Caco-2 (cell line): ENCODE measurements at regions of chr17 and their contacts with region 1.

Region 1: GRCh38 chr17:7716901-7717755 is at the start of gene DNAH2:
- DNase-seq: peak; percentile 84
- H3K4me3 ChIP-seq: peak within 1 kb of the TSS; percentile 55
- H3K4me3 Mint-ChIP-seq: peak within 1 kb of the TSS; percentile 85
- H3K27ac Mint-ChIP-seq: peak within 1 kb of the TSS; percentile 17
- H3K4me1 ChIP-seq: no peaks in the 10 kb centered on the region
- H3K4me1 Mint-ChIP-seq: no peaks in the 10 kb centered on the region
- H3K27me3 ChIP-seq: no peaks in the 10 kb centered on the region
- H3K27me3 Mint-ChIP-seq: peaks cover 11% of the 10 kb centered on the region
- CTCF ChIP-seq: peak in 1 of 2 experiments; percentile 57
- total RNA-seq, gene DNAH2: 1.9 and 2.8 TPM in 2 replicates

Region 2: DNA sequence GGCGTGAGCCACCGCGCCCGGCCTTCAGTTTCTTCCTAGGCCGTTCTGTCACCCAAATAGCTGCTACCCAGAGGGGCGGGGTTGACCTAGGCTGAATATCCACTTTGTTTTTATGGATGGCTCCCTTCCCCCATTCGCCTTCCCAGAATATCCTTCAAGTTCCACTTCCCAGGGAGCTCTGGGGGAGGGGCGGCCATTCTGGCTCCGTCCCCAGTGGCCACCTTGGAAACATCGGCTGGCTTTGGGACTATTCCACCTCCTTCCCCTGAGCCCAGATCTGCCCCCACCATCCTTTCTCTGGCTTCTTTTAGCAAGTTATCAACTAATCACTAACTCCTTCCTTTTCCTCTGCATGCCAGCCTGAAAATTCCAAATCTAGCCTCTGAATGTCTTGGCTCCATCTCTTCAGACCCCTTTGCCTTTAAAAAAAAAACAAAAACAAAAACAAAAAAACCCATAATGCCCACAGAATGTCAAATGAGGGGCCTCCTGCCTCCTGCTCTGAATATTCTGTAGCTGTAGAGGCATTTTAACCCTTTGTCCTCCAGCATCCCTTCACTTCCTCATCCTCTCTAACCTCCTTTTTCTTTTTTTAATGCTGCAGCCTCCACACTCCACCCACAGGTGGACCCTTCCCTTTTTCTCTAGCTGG is 60.0 kb before region 1 on chr17:
- CTCF ChIA-PET with region 1: interaction called, 10 read pairs
- POLR2A ChIA-PET with region 1: no interaction called
- intact Hi-C with region 1: no loop called
- DNase-seq: no peak
- H3K4me3 ChIP-seq: no peak overlapping the region
- H3K4me3 Mint-ChIP-seq: no peak overlapping the region
- H3K27ac Mint-ChIP-seq: no peak overlapping the region
- H3K4me1 ChIP-seq: no peaks in the 10 kb centered on the region
- H3K4me1 Mint-ChIP-seq: no peaks in the 10 kb centered on the region
- H3K27me3 ChIP-seq: no peaks in the 10 kb centered on the region
- H3K27me3 Mint-ChIP-seq: no peaks in the 10 kb centered on the region
- CTCF ChIP-seq: no peak

Region 3: GRCh38 chr17:7703584-7704479 is 13.3 kb before region 1 on chr17:
- CTCF ChIA-PET with region 1: interaction called, 24 read pairs
- POLR2A ChIA-PET with region 1: no interaction called
- intact Hi-C with region 1: no loop called
- DNase-seq: peak; percentile 44 to 59
- H3K4me3 ChIP-seq: no peak overlapping the region
- H3K4me3 Mint-ChIP-seq: peak overlapping the region; percentile 73
- H3K27ac Mint-ChIP-seq: peak overlapping the region; percentile 84
- H3K4me1 ChIP-seq: no peaks in the 10 kb centered on the region
- H3K4me1 Mint-ChIP-seq: no peaks in the 10 kb centered on the region
- H3K27me3 ChIP-seq: no peaks in the 10 kb centered on the region
- H3K27me3 Mint-ChIP-seq: no peaks in the 10 kb centered on the region
- CTCF ChIP-seq: no peak

Region 4: DNA sequence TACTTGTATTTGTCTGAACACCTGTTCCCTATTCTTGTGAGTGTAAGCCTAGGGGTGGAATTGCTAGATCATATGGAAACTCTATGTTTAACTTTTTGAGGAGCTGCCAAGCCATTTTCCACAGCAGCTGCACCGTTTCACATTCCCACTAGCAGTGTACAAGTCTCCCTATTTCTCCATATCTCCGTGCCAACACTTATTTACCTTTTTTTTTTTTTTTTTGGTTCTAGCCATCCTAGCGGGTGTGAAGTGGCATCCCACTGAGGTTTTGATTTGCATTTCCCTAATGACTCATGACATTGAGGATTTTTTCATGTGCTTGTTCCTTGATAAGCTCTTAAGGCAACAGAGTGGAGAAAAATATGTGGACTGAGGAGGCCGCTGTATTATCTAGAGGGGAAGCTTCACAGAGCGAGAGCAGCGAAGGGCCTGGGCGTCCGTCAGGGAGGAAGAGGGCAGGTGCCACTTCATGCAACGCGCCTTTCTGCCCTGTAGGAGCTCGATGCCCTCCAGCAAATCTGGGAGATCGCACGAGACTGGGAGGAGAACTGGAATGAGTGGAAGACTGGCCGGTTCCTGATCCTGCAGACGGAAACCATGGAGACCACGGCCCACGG is 50.4 kb after region 1 on chr17:
- CTCF ChIA-PET with region 1: no interaction called
- POLR2A ChIA-PET with region 1: no interaction called
- intact Hi-C with region 1: no loop called
- DNase-seq: no peak
- H3K4me3 ChIP-seq: no peak overlapping the region
- H3K4me3 Mint-ChIP-seq: no peak overlapping the region
- H3K27ac Mint-ChIP-seq: no peak overlapping the region
- H3K4me1 ChIP-seq: no peaks in the 10 kb centered on the region
- H3K4me1 Mint-ChIP-seq: no peaks in the 10 kb centered on the region
- H3K27me3 ChIP-seq: no peaks in the 10 kb centered on the region
- H3K27me3 Mint-ChIP-seq: no peaks in the 10 kb centered on the region
- CTCF ChIP-seq: no peak

Region 5: GRCh38 chr17:7834962-7835813 is 118.1 kb after region 1 on chr17:
- CTCF ChIA-PET with region 1: interaction called, 11 read pairs
- POLR2A ChIA-PET with region 1: no interaction called
- intact Hi-C with region 1: no loop called
- DNase-seq: peak; percentile 90 to 95
- H3K4me3 ChIP-seq: peak overlapping the region; percentile 82
- H3K4me3 Mint-ChIP-seq: peak overlapping the region; percentile 98
- H3K27ac Mint-ChIP-seq: peak overlapping the region; percentile 99
- H3K4me1 ChIP-seq: peaks cover 23% of the 10 kb centered on the region
- H3K4me1 Mint-ChIP-seq: peaks cover 19% of the 10 kb centered on the region
- H3K27me3 ChIP-seq: no peaks in the 10 kb centered on the region
- H3K27me3 Mint-ChIP-seq: no peaks in the 10 kb centered on the region
- CTCF ChIP-seq: peak; percentile 31 to 69

Region 6: DNA sequence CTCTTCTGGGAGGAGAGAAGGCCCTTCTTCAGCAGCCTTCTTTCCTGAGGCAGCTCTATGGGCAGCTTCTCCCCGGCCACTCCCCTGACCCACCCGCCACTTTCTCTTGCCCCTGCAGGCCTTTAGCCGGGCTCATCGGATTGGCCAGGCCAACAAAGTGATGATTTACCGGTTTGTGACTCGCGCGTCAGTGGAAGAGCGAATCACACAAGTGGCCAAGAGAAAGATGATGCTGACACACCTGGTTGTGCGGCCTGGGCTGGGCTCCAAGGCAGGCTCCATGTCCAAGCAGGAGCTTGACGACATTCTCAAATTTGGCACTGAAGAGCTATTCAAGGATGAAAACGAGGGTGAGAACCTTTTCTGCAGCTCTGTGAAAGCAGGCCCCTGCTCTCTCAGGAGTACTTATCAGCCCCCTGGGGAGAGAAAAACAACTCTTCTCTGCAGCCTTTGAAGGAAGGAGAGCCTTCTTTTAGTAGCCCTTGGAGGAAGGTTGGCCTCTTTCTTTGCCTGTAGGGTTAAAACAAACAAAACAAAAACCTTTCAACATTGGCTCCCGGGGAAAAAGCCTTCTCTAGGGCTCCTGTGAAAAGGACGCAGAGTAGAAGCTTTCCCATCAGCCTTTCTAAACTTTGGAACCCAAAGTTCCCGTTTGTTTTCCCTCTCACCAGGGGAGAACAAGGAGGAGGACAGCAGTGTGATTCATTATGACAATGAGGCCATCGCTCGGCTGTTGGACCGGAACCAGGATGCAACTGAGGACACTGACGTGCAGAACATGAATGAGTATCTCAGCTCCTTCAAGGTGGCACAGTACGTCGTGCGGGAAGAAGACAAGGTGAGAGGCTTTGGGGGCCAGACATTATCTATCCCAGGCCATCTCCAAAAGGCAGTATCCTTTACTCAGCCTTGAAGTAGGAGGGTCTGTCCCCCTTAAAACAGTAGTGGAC is 186.3 kb after region 1 on chr17:
- CTCF ChIA-PET with region 1: no interaction called
- POLR2A ChIA-PET with region 1: no interaction called
- intact Hi-C with region 1: no loop called
- DNase-seq: no peak
- H3K4me3 ChIP-seq: no peak overlapping the region
- H3K4me3 Mint-ChIP-seq: no peak overlapping the region
- H3K27ac Mint-ChIP-seq: no peak overlapping the region
- H3K4me1 ChIP-seq: no peaks in the 10 kb centered on the region
- H3K4me1 Mint-ChIP-seq: no peaks in the 10 kb centered on the region
- H3K27me3 ChIP-seq: no peaks in the 10 kb centered on the region
- H3K27me3 Mint-ChIP-seq: no peaks in the 10 kb centered on the region
- CTCF ChIP-seq: no peak